AG04450 (cell line): ENCODE measurements at regions of chr3 and their contacts with region 1.

Region 1: GRCh38 chr3:195894780-195895607 is 13.4 kb downstream of the TNK2 start:
- DNase-seq: peak; percentile 46
- H3K4me3 ChIP-seq: peak overlapping the region; percentile 72
- H3K27ac ChIP-seq: peak overlapping the region; percentile 31
- H3K27me3 ChIP-seq: no peaks in the 10 kb centered on the region
- CTCF ChIP-seq: peak; percentile 92

Region 2: DNA sequence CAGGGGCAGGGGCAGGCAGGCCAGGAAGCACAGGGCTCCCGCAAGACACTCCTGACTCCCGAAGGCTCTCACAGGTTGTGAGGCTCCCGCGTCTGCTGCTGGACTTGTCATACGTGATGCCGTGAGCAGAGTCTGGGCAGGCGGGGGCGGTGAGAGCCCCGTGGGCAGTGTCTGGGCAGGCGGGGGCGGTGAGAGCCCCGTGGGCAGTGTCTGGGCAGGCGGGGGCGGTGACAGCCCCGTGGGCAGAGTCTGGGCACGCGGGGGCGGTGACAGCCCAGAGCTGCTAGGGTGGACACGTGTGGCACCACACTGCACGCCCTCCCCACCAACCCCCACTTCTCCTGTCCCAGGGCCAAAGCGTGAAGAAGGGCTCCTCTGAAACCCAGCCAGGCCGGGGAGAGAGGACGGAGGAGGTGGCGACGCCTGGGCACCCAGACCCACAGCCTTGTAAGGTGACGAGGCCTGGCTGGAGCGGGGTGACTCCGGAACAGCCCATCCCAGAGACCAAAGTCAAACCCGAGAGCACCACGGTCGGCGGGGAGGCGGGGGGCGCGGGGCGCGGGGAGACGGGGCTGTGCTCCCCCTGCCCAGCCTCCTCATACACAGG is 21.6 kb before region 1 on chr3:
- CTCF ChIA-PET with region 1: interaction called, 10 read pairs
- POLR2A ChIA-PET with region 1: interaction called, 4 read pairs
- DNase-seq: no peak
- H3K4me3 ChIP-seq: no peak overlapping the region
- H3K27ac ChIP-seq: no peak overlapping the region
- H3K27me3 ChIP-seq: no peaks in the 10 kb centered on the region
- CTCF ChIP-seq: no peak

Region 3: DNA sequence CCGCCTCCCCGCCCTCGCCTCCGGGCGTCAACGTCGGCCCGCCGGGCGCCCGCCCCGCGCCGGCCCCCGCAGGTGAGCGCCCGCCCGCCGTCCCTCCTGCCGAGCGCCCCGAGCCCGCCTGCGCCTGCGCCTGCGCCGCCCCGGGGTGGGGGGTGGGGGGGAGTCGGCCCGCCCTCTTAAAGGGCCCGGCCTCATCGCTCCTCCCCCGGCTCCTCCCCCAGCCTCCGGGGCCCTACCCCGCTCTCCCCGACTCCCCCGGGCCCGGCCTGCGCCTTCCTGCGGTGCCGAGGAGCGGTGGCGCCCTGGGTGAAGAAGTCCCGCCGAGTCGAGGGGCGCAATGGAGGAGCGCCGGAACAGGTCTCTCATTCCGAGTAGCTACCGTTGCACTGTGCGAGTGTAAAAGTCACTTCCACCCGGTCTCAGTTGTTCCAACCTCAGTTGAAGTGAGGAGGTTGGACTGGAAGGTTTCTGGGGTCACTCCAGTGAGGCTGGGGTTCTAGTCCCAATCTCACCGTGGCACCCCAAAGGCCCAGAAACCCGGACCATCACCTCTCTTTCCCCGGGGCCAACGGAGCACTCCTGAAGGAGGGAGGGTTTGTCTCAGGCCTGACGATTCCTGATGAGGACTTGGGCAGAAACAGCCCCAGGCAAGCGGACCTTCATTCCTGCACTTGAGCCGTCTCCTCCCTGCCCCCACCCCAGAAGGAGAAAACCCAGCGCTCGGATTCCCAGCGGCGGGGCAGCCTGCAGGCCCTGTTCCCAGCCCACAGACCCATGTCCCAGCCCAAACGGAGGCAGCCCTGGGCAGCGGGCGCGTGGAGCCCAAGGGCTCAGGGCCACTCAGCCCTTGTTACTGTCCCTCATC is 14.9 kb after region 1 on chr3:
- CTCF ChIA-PET with region 1: interaction called, 102 read pairs
- POLR2A ChIA-PET with region 1: interaction called, 4 read pairs
- DNase-seq: no peak
- H3K4me3 ChIP-seq: peak overlapping the region; percentile 59
- H3K27ac ChIP-seq: peak overlapping the region; percentile 11
- H3K27me3 ChIP-seq: no peaks in the 10 kb centered on the region
- CTCF ChIP-seq: no peak

Region 4: DNA sequence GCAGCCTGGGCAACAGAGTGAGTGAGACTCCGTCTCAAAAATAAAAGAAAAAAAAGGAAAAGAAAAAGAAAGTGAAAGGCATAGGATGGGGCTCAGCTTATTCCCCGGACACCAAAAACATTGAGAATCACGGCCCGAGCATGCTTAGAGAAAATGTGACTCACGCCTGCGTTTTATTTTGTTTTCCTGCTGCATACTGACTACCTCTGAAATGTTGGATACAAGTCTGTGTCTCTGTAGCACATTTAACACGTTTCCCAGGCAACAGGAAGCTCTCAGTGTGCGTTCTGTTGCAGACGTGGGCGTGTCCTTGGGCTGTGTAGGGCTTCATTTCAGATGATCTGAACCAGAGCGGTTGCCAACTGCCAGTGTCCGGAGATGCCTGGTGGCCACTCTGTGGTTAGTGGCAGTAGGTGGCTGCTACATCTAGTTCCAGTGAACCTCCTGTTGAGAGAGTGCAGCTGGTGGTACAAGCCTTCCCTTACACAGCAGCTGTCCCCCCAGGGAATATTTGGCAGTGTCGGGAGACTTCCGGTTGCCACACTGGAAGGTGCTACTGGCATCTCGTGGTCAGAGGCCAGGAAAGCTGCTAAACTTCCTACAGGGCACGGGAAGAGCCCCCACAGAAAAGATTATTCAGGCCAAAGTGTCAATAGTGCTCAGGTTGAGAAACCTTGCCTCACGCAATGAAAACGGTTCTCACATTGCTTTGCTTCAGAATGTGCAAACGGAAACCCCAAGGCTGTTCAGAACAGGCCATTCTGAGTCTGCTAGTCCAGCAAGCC is 324.4 kb after region 1 on chr3:
- CTCF ChIA-PET with region 1: no interaction called
- POLR2A ChIA-PET with region 1: no interaction called
- DNase-seq: peak; percentile 63
- H3K4me3 ChIP-seq: peak overlapping the region; percentile 44
- H3K27ac ChIP-seq: peak overlapping the region; percentile 47
- H3K27me3 ChIP-seq: peaks cover 17% of the 10 kb centered on the region
- CTCF ChIP-seq: no peak